Breast epithelium (tissue), 4 donors: ENCODE measurements at regions of chr16 and their contacts with region 1.

Region 1: DNA sequence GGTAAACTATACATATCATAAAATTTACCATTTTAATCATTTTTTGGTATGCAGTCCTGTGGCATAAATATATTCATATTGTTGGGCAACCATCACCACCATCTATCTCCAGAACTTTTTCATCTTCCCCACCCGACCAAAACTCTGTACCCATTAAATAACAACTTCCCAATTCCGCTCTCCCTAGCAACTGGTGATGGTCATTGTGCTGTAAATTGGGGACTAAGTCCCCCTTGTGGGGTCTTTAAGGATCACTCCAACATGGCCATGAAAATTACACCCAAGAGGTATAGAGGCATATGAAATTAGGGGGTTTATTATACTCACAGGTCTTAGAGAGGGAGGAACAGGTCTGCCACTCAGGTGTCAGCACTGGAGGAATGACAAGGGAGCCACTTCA is 57.4 kb upstream of the NKD1 start:
- DNase-seq: no peak
- H3K4me3 ChIP-seq: no peak overlapping the region
- H3K27ac ChIP-seq: no peak overlapping the region
- H3K4me1 ChIP-seq: no peaks in the 10 kb centered on the region
- H3K27me3 ChIP-seq: no peaks in the 10 kb centered on the region
- CTCF ChIP-seq: no peak
- POLR2A ChIP-seq: no peak

Region 2: GRCh38 chr16:50474138-50474537 is 16.7 kb before region 1 on chr16:
- intact Hi-C with region 1: loop called (anchors 1 kb)
- DNase-seq: no peak
- H3K4me3 ChIP-seq: no peak overlapping the region
- H3K27ac ChIP-seq: no peak overlapping the region
- H3K4me1 ChIP-seq: no peaks in the 10 kb centered on the region
- H3K27me3 ChIP-seq: peaks cover 0 to 14% of the 10 kb centered on the region in 2 donors
- CTCF ChIP-seq: no peak
- POLR2A ChIP-seq: no peak

Region 3: DNA sequence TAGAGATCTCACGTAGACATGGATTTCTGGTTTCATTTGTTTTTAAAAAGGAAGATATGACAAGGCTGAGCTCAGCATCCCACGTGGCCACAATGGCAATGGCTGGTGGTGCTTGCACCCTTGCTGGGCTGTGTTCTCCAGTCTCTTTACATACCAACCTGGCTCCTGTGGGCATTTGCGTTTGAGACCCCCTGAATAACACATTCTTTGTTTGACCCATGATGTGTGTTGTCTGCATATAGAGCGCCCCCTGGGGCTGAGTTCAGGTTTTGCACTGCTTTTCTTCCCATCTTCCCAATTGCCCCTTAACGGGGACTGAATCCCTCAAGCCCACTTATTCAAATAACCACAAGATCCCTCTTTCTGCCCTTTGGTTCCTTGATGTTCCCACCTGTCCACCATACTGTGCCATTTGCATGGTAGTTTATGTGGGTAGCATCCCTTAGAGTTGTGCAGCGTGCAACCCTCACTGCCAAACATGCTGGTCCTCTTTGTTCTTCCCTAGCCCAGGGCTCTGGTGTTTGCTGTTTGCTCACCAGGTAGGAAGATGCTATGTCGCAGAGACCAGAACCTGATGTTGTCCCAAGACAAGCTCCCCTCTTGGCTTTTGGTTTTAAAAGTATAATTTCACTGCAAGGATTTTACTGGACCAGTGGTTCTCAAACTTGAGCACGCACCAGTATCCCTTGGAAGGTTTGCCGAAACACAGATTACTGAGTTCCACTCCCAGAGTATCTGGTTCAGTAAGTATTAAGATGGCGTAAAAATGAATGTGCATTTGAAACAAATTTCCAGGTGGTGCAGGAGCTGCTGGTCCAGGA is 18.9 kb after region 1 on chr16:
- intact Hi-C with region 1: no loop called
- DNase-seq: no peak
- H3K4me3 ChIP-seq: no peak overlapping the region
- H3K27ac ChIP-seq: no peak overlapping the region
- H3K4me1 ChIP-seq: no peaks in the 10 kb centered on the region
- H3K27me3 ChIP-seq: no peaks in the 10 kb centered on the region
- CTCF ChIP-seq: no peak
- POLR2A ChIP-seq: no peak